ENCODE measurements at regions of chr17 and their contacts with region 1.

Region 1: GRCh38 chr17:4412933-4413831 is 20.6 kb upstream of the SPNS3 start:
- DNase-seq: peak; percentile 93
- H3K4me3 ChIP-seq: peak overlapping the region; percentile 19
- H3K27ac ChIP-seq: no peak overlapping the region
- H3K4me1 ChIP-seq: no peaks in the 10 kb centered on the region
- H3K27me3 ChIP-seq: no peaks in the 10 kb centered on the region
- CTCF ChIP-seq: peak; percentile 91

Region 2: DNA sequence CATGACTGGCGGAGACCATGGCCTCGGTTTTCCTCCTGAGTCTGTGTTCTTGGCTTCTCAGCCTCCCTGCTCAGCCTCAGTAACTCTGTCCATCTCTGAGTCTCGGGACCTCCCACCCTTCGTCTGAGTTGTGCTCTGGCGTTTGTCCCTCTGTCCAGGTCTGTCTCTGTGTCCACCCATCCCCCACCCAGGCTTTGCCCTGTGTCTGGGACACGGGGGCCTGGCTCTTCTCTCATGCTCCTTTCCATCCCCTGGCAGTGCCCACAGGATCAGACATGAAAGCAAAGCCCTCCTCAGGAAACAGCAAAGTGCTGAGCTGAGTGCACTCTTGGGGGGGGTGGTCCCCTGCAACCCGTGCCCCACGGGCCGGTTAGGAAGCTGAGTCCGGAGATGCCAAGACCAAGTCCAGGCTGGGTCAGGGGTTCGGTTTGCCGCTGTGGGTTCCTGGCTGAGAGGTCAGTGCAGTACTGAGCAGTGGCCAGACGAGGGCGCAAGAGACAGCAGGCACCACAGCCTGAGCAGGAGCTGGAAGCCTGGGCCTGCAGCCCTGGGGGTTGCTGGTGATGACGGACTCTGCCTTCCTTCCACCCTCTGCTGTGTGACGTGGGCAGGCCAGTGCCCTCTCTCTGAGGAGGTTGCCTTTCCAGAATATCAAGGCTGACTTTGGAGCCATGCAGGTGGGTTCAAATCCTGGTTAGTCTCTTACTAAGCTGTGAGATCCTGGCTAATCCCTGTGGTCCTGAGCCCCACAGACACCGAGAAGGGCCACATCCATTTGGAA is 499.5 kb before region 1 on chr17:
- CTCF ChIA-PET with region 1: no interaction called
- POLR2A ChIA-PET with region 1: no interaction called
- intact Hi-C with region 1: loop called (anchors 10 kb)
- DNase-seq: peak; percentile 74
- H3K4me3 ChIP-seq: no peak overlapping the region
- H3K27ac ChIP-seq: no peak overlapping the region
- H3K4me1 ChIP-seq: peaks cover 9% of the 10 kb centered on the region
- H3K27me3 ChIP-seq: no peaks in the 10 kb centered on the region
- CTCF ChIP-seq: peak; percentile 97

Region 3: GRCh38 chr17:4199818-4200402 is 213.3 kb before region 1 on chr17:
- CTCF ChIA-PET with region 1: interaction called, 26 read pairs
- POLR2A ChIA-PET with region 1: no interaction called
- intact Hi-C with region 1: loop called (anchors 1 kb)
- DNase-seq: peak; percentile 69
- H3K4me3 ChIP-seq: no peak overlapping the region
- H3K27ac ChIP-seq: peak overlapping the region; percentile 11
- H3K4me1 ChIP-seq: peaks cover 3% of the 10 kb centered on the region
- H3K27me3 ChIP-seq: no peaks in the 10 kb centered on the region
- CTCF ChIP-seq: peak; percentile 79

Region 4: DNA sequence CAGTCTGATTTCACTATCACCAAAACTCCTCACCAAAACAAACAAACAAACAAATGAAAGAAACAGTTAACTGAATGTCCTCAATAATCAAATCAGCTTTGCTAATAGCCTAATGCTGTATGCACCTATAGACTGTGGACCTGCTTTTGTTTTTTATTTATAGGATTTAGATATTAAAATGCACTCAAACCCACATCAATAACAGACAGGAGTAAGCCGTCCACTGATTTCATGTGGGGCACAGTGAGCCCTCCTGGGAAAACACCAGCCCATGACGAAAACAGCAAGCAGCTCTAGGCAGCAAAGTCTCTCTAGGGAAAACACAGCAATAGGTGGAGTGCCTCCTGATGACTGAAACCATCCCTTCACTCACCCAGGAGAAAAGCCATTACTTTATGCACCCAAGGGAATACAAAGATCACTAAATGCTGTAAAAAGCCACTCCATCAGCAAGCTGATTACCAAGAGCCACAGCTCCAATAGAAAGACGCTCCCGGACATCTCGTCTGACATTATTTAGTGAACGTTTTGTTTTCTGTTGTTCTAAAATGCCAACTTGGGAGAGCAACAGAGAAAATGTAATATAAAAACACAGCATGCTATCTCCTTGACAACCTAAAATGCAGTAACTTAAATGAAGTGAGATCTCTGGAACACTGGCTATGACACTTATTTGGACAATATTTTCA is 197.2 kb before region 1 on chr17:
- CTCF ChIA-PET with region 1: interaction called, 21 read pairs
- POLR2A ChIA-PET with region 1: no interaction called
- intact Hi-C with region 1: loop called (anchors 2 kb)
- DNase-seq: no peak
- H3K4me3 ChIP-seq: no peak overlapping the region
- H3K27ac ChIP-seq: no peak overlapping the region
- H3K4me1 ChIP-seq: peaks cover 26% of the 10 kb centered on the region
- H3K27me3 ChIP-seq: no peaks in the 10 kb centered on the region
- CTCF ChIP-seq: no peak

Region 5: GRCh38 chr17:4307179-4307930 is 105.8 kb before region 1 on chr17:
- CTCF ChIA-PET with region 1: no interaction called
- POLR2A ChIA-PET with region 1: no interaction called
- intact Hi-C with region 1: no loop called
- DNase-seq: no peak
- H3K4me3 ChIP-seq: no peak overlapping the region
- H3K27ac ChIP-seq: no peak overlapping the region
- H3K4me1 ChIP-seq: peaks cover 23% of the 10 kb centered on the region
- H3K27me3 ChIP-seq: no peaks in the 10 kb centered on the region
- CTCF ChIP-seq: no peak

Region 6: DNA sequence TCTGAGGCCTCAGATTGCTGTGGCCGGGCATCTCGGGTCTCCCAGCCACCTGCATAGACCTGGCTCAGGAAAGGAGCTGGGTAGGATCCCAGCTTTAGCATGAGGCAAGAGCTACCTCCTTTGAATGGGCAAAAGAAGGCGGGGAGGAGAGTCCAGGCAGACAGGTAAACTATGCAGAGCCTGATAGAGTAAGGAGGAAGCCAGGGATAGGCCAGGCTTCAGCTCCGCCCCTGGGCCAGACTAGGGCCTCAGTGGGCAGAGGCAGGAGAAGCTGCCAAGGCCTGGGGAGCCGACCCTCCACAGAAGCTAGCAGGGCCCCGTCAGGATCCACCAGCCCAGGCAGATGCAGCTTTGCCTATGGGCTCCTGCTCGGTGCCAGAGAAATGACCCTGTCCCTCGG is 24.1 kb before region 1 on chr17:
- CTCF ChIA-PET with region 1: interaction called, 10 read pairs
- POLR2A ChIA-PET with region 1: no interaction called
- intact Hi-C with region 1: no loop called
- DNase-seq: no peak
- H3K4me3 ChIP-seq: no peak overlapping the region
- H3K27ac ChIP-seq: no peak overlapping the region
- H3K4me1 ChIP-seq: no peaks in the 10 kb centered on the region
- H3K27me3 ChIP-seq: no peaks in the 10 kb centered on the region
- CTCF ChIP-seq: no peak